RWPE1 (cell line): ENCODE measurements at regions of chr1 and their contacts with region 1.

Region 1: GRCh38 chr1:204506961-204507387 is 9.2 kb upstream of the MDM4 start:
- DNase-seq: peak; percentile 74
- H3K27ac ChIP-seq: peak overlapping the region; percentile 91
- CTCF ChIP-seq: no peak

Region 2: GRCh38 chr1:204398217-204399081 is 108.5 kb before region 1 on chr1:
- CTCF ChIA-PET with region 1: interaction called, 31 read pairs
- POLR2A ChIA-PET with region 1: no interaction called
- DNase-seq: peak; percentile 98
- H3K27ac ChIP-seq: peak overlapping the region; percentile 61
- CTCF ChIP-seq: peak; percentile 86

Region 3: DNA sequence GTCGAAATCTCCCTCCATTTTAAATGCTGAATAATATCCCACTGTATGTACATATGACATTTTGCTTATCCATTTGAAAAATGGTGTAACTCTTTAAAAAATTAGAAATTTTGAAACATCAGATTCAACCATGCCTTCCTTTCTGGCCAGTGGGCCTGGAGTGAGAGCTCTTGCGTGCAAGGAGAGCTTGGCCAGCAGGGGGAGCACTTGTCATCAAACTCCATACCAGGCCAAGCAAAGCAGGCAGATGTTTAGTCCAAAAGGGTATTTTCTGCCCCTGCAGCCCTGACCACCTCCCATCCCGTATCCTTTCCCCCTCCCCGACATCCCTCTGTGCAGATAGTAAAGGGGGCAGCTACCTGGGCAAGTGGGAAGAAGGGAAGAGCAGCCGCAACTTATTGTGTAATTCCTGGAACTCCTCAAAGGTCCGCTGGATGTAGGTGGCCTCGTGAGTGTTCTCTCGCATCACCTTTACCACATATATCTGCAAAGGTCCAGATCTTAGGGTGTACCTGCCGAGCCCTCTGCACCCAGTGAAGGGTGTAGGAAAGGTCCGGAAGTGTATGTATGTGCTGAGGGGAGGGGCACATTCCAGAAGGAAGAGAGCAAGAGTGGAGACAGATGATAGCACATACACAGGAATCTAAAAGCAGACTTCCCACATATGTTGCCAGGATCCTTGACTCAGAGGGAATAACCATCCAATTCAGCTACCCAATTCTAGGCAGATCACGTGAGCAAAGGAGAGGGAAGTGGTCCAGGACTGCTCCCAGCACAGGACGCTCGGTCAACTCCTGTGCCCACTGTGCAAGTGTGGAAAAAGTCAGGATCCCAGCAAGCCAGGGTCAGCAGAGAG is 75.4 kb before region 1 on chr1:
- CTCF ChIA-PET with region 1: interaction called, 37 read pairs
- POLR2A ChIA-PET with region 1: no interaction called
- DNase-seq: peak; percentile 80
- H3K27ac ChIP-seq: peak overlapping the region; percentile 69
- CTCF ChIP-seq: peak; percentile 90

Region 4: DNA sequence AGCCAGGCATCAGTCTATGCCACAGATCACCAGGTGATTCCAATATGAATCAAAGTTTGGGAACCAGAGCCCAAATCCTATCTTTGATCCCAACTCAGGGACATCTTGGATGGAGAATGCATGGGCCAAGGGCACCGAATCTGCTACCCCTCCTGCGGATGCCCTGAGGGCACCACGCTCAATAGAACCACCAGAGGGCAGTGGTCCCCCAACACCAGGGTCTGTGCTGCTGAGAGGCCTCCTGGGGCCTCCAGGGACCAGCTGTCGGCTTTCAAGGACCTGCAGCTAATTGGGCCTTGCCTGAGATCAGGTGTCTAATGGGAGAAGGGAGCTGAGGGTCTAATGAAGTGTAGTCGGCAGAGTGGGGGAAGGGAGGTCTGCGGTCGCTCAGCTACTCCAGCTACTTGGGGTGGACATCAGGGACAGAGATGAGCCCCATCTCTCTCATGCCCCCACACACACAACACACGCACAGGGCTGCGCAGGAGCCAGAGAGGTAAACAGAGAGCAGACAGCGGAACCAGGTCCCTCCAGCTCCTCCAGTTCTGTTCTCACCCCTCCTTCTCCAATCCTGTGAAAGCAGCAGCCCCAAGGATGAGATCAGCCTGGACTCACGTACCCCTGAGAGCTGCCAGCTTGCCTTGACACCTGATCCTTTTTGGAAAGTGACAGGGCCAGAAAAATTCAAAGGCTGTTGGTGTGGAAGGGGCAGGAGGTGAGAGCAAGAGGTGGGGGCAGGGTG is 60.4 kb before region 1 on chr1:
- CTCF ChIA-PET with region 1: interaction called, 10 read pairs
- POLR2A ChIA-PET with region 1: no interaction called
- DNase-seq: peak; percentile 67
- H3K27ac ChIP-seq: peak overlapping the region; percentile 48; the same call in 1 of the 2 replicates
- CTCF ChIP-seq: peak; percentile 37

Region 5: DNA sequence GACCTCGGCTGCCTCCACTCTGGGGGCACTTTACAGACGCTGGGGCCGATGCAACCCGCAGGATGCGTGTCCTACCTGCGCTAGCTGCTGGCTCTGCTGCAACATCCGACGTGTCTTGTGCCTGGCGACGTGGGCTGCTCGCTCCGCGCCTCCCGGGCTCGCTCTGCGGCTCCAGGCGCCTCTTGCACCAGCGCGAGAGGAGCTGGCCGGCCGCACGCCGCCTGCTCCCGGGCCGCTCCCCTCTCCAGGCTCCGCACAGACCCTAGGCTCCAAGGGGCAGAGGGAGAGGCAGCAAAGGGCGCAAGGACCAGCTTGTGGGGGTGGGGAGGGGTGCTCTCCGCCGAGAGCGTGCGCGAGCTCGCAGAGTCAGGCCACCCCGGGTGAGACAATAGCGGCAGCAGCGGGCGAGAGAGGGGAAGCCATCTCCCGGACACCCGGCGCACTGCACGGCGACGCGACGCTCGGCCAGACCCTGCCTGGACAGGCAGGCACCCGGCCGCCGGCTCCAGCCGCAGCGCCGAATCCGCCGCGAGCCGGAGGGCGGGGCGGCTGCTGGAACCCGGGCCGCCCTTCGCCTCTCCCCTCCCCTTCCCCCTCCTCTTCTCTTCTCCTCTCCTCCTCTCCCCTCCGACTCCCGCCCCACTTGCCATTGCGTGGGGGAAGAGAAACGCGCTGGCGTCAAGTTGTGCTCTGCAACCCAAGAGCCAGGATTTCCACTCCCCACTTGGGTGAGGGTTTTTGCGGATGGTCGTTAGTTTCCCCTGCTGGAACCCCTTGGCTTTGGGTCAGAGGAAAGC is 12.5 kb before region 1 on chr1 and contains the start of gene PIK3C2B:
- CTCF ChIA-PET with region 1: interaction called, 35 read pairs
- POLR2A ChIA-PET with region 1: no interaction called
- DNase-seq: peak; percentile 97
- H3K27ac ChIP-seq: peak within 1 kb of the TSS; percentile 94
- CTCF ChIP-seq: peak; percentile 58